ENCODE measurements at regions of chr5 and their contacts with region 1.

Region 1: DNA sequence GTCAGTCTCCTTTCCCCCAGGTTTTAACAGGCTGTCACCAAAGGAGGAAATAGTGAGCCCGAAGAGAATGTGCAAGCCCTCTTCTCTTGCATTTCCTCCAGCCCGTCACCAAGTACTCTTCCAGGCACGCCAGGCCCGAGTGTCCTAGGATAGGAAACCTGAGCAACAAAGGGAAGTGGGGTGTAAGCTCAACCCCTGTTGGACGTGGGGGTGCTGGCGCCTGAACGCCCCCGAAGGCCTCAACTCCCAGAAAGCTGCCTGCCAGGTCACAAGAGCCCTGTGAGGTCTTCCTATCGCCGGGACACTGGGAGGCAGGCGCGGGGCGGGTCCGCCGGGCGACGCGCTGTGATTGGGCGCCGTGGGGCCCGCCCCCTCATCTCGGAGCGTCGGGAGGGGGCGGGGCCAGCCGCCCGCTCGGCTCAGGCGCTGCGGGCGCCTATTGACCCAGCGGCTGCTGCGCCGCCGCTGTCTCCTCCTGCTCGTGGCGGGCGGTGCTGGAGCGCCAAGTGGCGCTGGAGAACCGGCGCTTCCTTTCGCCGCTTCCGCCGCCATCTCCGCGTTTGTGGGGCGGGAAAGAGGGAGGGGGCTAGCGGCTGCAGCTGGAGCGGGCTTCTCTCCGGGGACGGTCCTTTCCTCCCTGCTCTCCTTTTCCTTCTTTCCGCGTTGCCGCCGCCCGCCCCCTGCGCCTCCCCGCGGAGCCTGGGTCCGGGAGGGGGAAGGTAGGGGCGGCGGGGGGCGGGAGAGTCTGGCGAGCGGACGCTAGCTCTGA is 572 bp upstream of the MAN2A1 start:
- DNase-seq: peak; percentile 74 to 86 (median 80)
- H3K4me3 ChIP-seq: peak overlapping the region; percentile 79
- H3K4me3 Mint-ChIP-seq: peak overlapping the region; percentile 84 to 96 (median 91)
- H3K27ac ChIP-seq: peak overlapping the region; percentile 90
- H3K27ac Mint-ChIP-seq: peak overlapping the region; percentile 91 to 99 (median 96)
- H3K4me1 ChIP-seq: peaks cover 21% of the 10 kb centered on the region
- H3K4me1 Mint-ChIP-seq: peaks cover 34 to 40% (median 37%) of the 10 kb centered on the region in 3 donors
- H3K27me3 ChIP-seq: no peaks in the 10 kb centered on the region
- H3K27me3 Mint-ChIP-seq: peaks cover 2 to 5% of the 10 kb centered on the region in 2 donors

Region 2: DNA sequence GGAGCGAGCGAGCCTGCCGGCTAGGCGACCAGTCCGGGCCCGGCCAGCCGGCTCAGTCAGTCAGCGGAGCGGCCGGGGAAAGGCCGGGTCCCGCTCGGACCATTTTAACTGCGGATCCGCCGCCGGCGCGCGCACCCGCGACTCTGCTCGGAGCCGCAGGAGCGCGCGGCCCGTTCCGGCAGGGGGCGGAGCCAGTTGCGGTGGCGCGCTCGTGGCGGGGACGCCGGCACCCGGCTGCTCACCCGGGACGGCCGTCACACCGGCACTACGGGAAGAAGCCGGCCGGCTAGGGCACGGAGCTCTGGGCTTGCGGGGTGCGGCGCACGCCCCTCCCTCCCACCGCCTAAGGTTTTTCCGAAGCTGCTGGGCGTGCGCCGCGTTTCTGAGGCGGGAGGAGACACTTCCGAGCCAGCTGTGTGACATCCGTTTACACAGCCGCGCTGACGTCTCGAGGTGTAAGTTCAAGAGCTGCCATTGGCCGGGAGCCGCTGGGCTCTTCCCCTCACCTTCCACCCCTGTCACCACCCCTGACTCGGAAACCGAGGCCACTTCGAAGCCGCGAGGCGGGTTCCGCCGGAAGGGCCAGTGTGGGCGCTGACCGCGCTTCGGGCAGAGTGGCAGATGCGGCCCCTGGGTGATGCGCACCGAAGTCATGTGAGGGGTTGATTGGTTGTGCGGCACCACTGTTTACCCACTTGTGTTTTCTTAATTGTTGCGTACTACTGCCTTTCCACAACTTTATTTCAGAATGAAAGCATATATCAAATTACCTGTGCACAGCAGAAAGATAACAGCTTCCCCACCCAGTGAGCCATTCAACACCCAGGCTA is 1307.0 kb before region 1 on chr5 and contains the start of gene FBXL17:
- CTCF ChIA-PET with region 1: no interaction called
- POLR2A ChIA-PET with region 1: interaction called, 19 read pairs
- DNase-seq: peak; percentile 84 to 96 (median 92)
- H3K4me3 ChIP-seq: peak within 1 kb of the TSS; percentile 87
- H3K4me3 Mint-ChIP-seq: peak within 1 kb of the TSS; percentile 86 to 98 (median 89)
- H3K27ac ChIP-seq: peak within 1 kb of the TSS; percentile 96
- H3K27ac Mint-ChIP-seq: peak within 1 kb of the TSS; percentile 93 to 99 (median 98)
- H3K4me1 ChIP-seq: peaks cover 31% of the 10 kb centered on the region
- H3K4me1 Mint-ChIP-seq: peaks cover 36 to 50% (median 38%) of the 10 kb centered on the region in 3 donors
- H3K27me3 ChIP-seq: no peaks in the 10 kb centered on the region
- H3K27me3 Mint-ChIP-seq: peaks cover 0 to 1% of the 10 kb centered on the region in 2 donors
- total RNA-seq, gene FBXL17: 6.4 to 6.9 TPM

Region 3: GRCh38 chr5:109409844-109410388 is 279.2 kb before region 1 on chr5 and contains the start of gene PJA2:
- CTCF ChIA-PET with region 1: no interaction called
- POLR2A ChIA-PET with region 1: interaction called, 13 read pairs
- DNase-seq: peak; percentile 89 to 98 (median 97)
- H3K4me3 ChIP-seq: peak within 1 kb of the TSS; percentile 98
- H3K4me3 Mint-ChIP-seq: peak within 1 kb of the TSS; percentile 95 to 100 (median 97)
- H3K27ac ChIP-seq: peak within 1 kb of the TSS; percentile 98
- H3K27ac Mint-ChIP-seq: peak within 1 kb of the TSS; percentile 97 to 100 (median 100)
- H3K4me1 ChIP-seq: peaks cover 27% of the 10 kb centered on the region
- H3K4me1 Mint-ChIP-seq: peaks cover 38 to 53% (median 53%) of the 10 kb centered on the region in 3 donors
- H3K27me3 ChIP-seq: no peaks in the 10 kb centered on the region
- H3K27me3 Mint-ChIP-seq: peaks cover 0 to 8% of the 10 kb centered on the region in 2 donors
- total RNA-seq, gene PJA2: 37.5 to 39.5 TPM

Region 4: DNA sequence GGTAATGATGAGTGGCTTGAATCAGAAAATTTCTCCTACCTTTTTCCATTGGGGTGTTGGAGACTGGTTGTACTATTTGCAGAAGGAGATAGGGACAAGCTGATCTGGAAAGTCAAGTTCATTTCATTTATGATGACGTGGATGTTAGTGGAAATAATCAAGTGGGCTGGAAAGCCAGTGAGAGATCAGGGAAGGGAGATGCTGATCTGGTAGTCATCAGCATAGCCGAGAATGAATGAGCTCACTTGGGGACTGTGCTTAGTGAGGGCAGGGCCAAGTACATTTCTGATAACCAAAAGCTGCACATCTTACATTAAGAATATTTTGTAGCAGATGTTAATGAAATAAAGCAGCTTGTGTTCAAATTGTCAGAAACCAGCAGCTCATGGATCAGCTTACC is 12.6 kb after region 1 on chr5:
- CTCF ChIA-PET with region 1: interaction called, 11 read pairs
- POLR2A ChIA-PET with region 1: no interaction called
- DNase-seq: no peak
- H3K4me3 ChIP-seq: no peak overlapping the region
- H3K4me3 Mint-ChIP-seq: peak overlapping the region in 3 of 7 donors; percentile 3 to 37 (median 4)
- H3K27ac ChIP-seq: no peak overlapping the region
- H3K27ac Mint-ChIP-seq: no peak overlapping the region
- H3K4me1 ChIP-seq: peaks cover 76% of the 10 kb centered on the region
- H3K4me1 Mint-ChIP-seq: peaks cover 81 to 100% (median 95%) of the 10 kb centered on the region in 3 donors
- H3K27me3 ChIP-seq: no peaks in the 10 kb centered on the region
- H3K27me3 Mint-ChIP-seq: no peaks in the 10 kb centered on the region

Region 5: GRCh38 chr5:109921735-109922380 is 232.7 kb after region 1 on chr5:
- CTCF ChIA-PET with region 1: interaction called, 6 read pairs
- POLR2A ChIA-PET with region 1: interaction called, 11 read pairs
- DNase-seq: peak in 3 of 5 donors; percentile 70 to 86 (median 78)
- H3K4me3 ChIP-seq: peak overlapping the region; percentile 26
- H3K4me3 Mint-ChIP-seq: peak overlapping the region; percentile 21 to 89 (median 75)
- H3K27ac ChIP-seq: no peak overlapping the region
- H3K27ac Mint-ChIP-seq: peak overlapping the region; percentile 78 to 91 (median 86)
- H3K4me1 ChIP-seq: peaks cover 42% of the 10 kb centered on the region
- H3K4me1 Mint-ChIP-seq: peaks cover 33 to 55% (median 48%) of the 10 kb centered on the region in 3 donors
- H3K27me3 ChIP-seq: no peaks in the 10 kb centered on the region
- H3K27me3 Mint-ChIP-seq: no peaks in the 10 kb centered on the region